Dorsolateral prefrontal cortex (tissue), 120 donors: ENCODE measurements at regions of chr22 and their contacts with region 1.

Region 1: GRCh38 chr22:42444077-42444904 is 12.1 kb upstream of the NFAM1 start:
- DNase-seq: peak; percentile 60 to 92 (median 84)
- H3K4me3 ChIP-seq: peak overlapping the region; percentile 33 to 71 (median 55)
- H3K27ac ChIP-seq: peak overlapping the region; percentile 63 to 98 (median 92)
- H3K27me3 ChIP-seq: no peaks in the 10 kb centered on the region
- CTCF ChIP-seq: peak; percentile 32 to 87 (median 73)

Region 2: GRCh38 chr22:41966607-41967240 is 477.6 kb before region 1 on chr22:
- intact Hi-C with region 1: loop called (anchors 2 to 10 kb)
- DNase-seq: peak in 6 of 10 donors; percentile 46 to 60 (median 56)
- H3K4me3 ChIP-seq: no peak overlapping the region
- H3K27ac ChIP-seq: peak overlapping the region in 54 of 59 donors; percentile 2 to 85 (median 60)
- H3K27me3 ChIP-seq: no peaks in the 10 kb centered on the region
- CTCF ChIP-seq: peak in 54 of 56 donors; percentile 9 to 73 (median 50)

Region 3: GRCh38 chr22:41976401-41976901 is 467.8 kb before region 1 on chr22:
- intact Hi-C with region 1: loop called in 1 of 2 experiments (anchors 10 kb)
- DNase-seq: peak in 8 of 10 donors; percentile 45 to 85 (median 68)
- H3K4me3 ChIP-seq: peak overlapping the region; percentile 45 to 83 (median 71)
- H3K27ac ChIP-seq: peak overlapping the region in 55 of 59 donors; percentile 50 to 92 (median 83)
- H3K27me3 ChIP-seq: no peaks in the 10 kb centered on the region
- CTCF ChIP-seq: no peak

Region 4: DNA sequence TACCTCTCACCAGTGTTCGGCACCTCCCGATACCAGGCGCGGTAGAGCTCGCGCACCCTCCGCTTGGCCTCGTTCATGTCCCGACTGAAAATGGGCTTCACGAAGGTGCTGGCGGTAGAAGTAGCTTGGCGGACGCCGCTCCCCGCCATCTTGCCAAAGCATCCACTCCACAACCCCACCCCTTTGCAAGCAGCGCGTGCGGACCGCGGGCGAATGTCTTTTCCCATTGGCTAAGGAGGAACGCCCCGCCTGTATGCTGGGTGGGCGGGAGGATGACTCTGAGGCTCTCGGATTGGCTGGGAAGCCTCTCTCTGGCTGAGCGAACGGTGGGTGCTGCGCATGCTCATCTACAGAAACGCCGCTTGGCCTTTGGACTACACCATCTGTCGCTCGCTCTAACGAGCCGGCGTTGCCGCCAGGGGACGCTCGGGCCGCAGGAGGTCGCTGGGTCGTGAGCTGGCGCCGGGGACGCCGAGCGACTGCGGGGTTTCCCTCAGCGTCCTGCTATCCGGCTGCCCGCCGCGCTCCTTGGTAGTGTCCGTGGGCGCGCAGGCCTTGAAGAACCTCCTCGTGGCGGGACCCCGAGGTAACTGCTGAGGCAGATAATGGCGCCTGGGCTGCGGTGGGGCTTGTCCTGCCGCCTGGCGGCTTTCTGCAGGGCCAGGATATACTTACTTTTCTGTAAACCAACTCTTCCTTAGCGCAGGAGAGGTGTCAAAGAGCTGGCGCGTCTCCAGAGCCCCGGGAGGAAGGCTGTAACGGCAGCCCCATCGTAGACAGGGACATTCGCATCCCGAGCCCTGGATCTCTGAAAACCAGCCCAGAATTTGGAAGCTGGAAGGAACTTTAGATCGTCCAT is 353.5 kb before region 1 on chr22 and contains the start of gene NDUFA6:
- intact Hi-C with region 1: loop called in 1 of 2 experiments (anchors 5 kb)
- DNase-seq: peak; percentile 99
- H3K4me3 ChIP-seq: peak within 1 kb of the TSS; percentile 66 to 99 (median 92)
- H3K27ac ChIP-seq: peak within 1 kb of the TSS; percentile 73 to 99 (median 94)
- H3K27me3 ChIP-seq: no peaks in the 10 kb centered on the region
- CTCF ChIP-seq: peak; percentile 74 to 99 (median 96)
- total RNA-seq, gene NDUFA6: 33.6 to 81.3 (median 55.8) TPM

Region 5: GRCh38 chr22:42202669-42203068 is 241.6 kb before region 1 on chr22:
- intact Hi-C with region 1: no loop called
- DNase-seq: no peak
- H3K4me3 ChIP-seq: no peak overlapping the region
- H3K27ac ChIP-seq: no peak overlapping the region
- H3K27me3 ChIP-seq: no peaks in the 10 kb centered on the region
- CTCF ChIP-seq: no peak

Region 6: DNA sequence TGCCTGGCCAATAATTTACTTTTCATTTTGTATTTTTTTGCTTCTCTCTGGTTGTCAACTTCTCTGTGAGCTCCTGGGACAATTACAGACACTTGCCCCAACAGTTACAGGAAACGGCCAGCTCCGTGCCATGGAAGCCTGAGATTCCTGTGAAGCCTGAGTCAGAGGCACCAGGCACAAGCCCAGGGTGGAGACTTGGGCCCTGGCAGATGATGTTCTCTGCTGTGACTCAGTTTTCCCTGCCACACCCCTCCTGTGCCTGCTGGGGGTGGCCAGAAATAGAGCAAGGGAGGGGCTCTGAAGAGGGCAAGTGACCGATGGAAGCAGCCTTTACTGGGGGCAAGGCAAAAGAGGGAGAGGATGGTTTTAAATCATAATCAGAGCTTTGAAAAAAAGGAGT is 191.2 kb after region 1 on chr22:
- intact Hi-C with region 1: no loop called
- DNase-seq: no peak
- H3K4me3 ChIP-seq: no peak overlapping the region
- H3K27ac ChIP-seq: peak overlapping the region in 10 of 59 donors; percentile 4 to 75 (median 25)
- H3K27me3 ChIP-seq: no peaks in the 10 kb centered on the region
- CTCF ChIP-seq: no peak